ENCODE measurements at regions of chr1 and their contacts with region 1.

Region 1: DNA sequence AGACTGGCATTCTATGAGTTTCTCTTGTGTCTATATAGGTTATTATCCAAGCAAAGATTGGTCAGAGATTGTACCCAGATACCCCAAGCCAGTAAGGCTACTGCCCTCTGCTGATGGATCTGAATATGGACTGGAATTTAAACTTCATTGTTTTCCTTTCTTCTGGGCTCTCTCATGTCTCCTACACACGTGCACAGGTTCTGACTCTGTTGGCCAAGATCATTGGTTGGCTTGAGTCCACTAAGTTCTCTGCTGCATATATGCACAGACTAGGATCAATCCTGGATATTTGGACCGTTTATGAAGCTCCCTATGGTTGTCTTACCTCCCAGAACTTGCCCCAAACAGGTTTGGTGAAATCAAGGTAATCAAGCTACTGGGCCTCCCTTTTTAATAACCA is 69.7 kb downstream of the CC2D1B start:
- DNase-seq: no peak
- ATAC-seq: peak; percentile 69 to 88
- H3K4me3 ChIP-seq: no peak overlapping the region
- H3K27ac ChIP-seq: no peak overlapping the region
- H3K4me1 ChIP-seq: no peaks in the 10 kb centered on the region
- H3K27me3 ChIP-seq: no peaks in the 10 kb centered on the region
- CTCF ChIP-seq: peak; percentile 63 to 78 (median 73)
- POLR2A ChIP-seq: no peak

Region 2: GRCh38 chr1:52127181-52128180 is 168.9 kb before region 1 on chr1:
- in situ Hi-C with region 1: loop called (anchors 5 to 10 kb)
- intact Hi-C with region 1: loop called (anchors 1 kb)
- DNase-seq: no peak
- ATAC-seq: peak; percentile 42 to 74
- H3K4me3 ChIP-seq: no peak overlapping the region
- H3K27ac ChIP-seq: no peak overlapping the region
- H3K4me1 ChIP-seq: no peaks in the 10 kb centered on the region
- H3K27me3 ChIP-seq: no peaks in the 10 kb centered on the region
- CTCF ChIP-seq: peak; percentile 51 to 81 (median 67)
- POLR2A ChIP-seq: no peak

Region 3: GRCh38 chr1:52534928-52535764 is 238.8 kb after region 1 on chr1:
- in situ Hi-C with region 1: no loop called
- intact Hi-C with region 1: no loop called
- DNase-seq: no peak
- ATAC-seq: no peak
- H3K4me3 ChIP-seq: no peak overlapping the region
- H3K27ac ChIP-seq: no peak overlapping the region
- H3K4me1 ChIP-seq: peaks cover 0 to 7% of the 10 kb centered on the region in 2 donors
- H3K27me3 ChIP-seq: no peaks in the 10 kb centered on the region
- CTCF ChIP-seq: no peak
- POLR2A ChIP-seq: no peak

Measured in gastrocnemius medialis (tissue), 4 donors.